Activated T-helper 1 cell treated with anti-CD3 and anti-CD28 coated beads, Interleukin-12 subunit alpha, Interleukin-12 subunit beta, Interleukin-2, Interleukin-4 antibody, amounts not matched to agents 30 ng/mL and 10 ng/mL and 1 ng/mL, durations not matched to agents 14 hours and 24 hours and 36 hours (primary cell): ENCODE measurements at regions of chr14 and their contacts with region 1.

Region 1: GRCh38 chr14:68047906-68048305 is 228.3 kb downstream of the RAD51B start:
- DNase-seq: no peak
- H3K4me3 Mint-ChIP-seq: no peak overlapping the region
- H3K27ac Mint-ChIP-seq: no peak overlapping the region
- H3K4me1 Mint-ChIP-seq: no peaks in the 10 kb centered on the region
- H3K27me3 Mint-ChIP-seq: no peaks in the 10 kb centered on the region

Region 2: GRCh38 chr14:67831113-67831512 is 216.8 kb before region 1 on chr14:
- intact Hi-C with region 1: loop called (anchors 2 kb)
- DNase-seq: no peak
- H3K4me3 Mint-ChIP-seq: no peak overlapping the region
- H3K27ac Mint-ChIP-seq: no peak overlapping the region
- H3K4me1 Mint-ChIP-seq: no peaks in the 10 kb centered on the region
- H3K27me3 Mint-ChIP-seq: no peaks in the 10 kb centered on the region

Region 3: DNA sequence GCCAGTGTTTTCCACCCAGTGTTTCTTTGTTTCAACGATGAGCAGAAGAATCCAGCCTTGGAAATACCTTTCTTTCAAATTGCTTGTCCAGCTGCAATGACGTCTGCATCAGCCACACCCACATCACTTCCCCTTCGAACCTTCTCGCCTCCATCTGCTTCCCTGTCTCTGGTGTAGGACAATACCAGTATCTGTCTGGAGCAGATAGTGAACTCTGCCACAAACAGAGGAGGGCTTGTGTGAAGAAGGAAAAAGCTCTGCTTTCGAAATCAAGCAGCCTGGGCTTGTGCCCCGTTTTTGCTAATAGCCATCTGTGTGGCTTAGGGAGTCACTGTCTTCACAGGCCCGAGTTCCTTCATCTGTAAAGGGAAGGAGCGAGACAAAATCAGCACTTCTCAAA is 329.6 kb after region 1 on chr14:
- intact Hi-C with region 1: no loop called
- DNase-seq: no peak
- H3K4me3 Mint-ChIP-seq: no peak overlapping the region
- H3K27ac Mint-ChIP-seq: no peak overlapping the region
- H3K4me1 Mint-ChIP-seq: peaks cover 19% of the 10 kb centered on the region
- H3K27me3 Mint-ChIP-seq: no peaks in the 10 kb centered on the region